ENCODE measurements at regions of chr12 and their contacts with region 1.

Region 1: DNA sequence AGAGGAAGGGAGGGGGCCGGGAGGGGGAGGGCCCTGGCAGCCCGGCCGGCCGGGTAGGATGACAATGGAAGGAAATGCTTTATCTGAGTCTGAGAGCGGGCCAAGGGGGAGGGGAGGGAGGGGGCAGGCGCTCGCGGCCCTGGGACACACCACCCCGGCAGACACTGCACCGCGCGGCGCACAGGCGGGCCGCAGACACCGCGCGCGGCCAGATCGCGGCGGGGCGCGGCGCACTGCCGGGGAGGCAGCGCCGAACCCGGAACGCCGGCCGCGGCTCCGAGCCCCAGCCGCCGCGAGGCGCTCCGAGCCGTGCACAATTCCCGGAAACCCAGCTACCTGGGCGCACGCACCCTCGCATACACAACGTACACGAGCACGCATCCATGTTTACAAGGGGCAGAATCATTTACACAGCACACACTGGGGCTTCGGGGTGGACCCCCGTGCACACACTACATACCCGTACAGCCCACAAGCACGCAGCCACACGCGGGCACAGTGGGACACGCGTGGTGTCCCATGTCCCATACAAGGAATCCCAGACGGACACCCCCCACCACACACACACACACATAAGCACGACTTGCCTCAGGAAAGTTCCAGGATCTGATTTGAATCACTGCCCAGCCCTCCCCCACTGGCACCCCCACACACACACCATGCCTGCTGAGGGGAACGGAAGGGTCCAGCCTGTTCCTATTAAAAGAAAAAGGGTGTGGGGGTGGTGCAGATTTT is at the start of gene HDAC7:
- DNase-seq: peak in 1 of 2 donors; percentile 91
- H3K4me3 ChIP-seq: peak within 1 kb of the TSS; percentile 88 to 89
- H3K27ac ChIP-seq: peak within 1 kb of the TSS; percentile 97
- H3K4me1 ChIP-seq: peaks cover 34 to 66% of the 10 kb centered on the region in 2 donors
- H3K27me3 ChIP-seq: no peaks in the 10 kb centered on the region
- CTCF ChIP-seq: peak in 1 of 3 experiments; percentile 22
- total RNA-seq, gene HDAC7: 202 TPM

Region 2: GRCh38 chr12:46372544-46373110 is 1447.4 kb before region 1 on chr12 and contains the start of gene SLC38A2:
- intact Hi-C with region 1: loop called (anchors 5 kb)
- DNase-seq: peak; percentile 90 to 99
- H3K4me3 ChIP-seq: peak within 1 kb of the TSS; percentile 94 to 98
- H3K27ac ChIP-seq: peak within 1 kb of the TSS; percentile 97 to 98
- H3K4me1 ChIP-seq: peaks cover 4 to 15% of the 10 kb centered on the region in 2 donors
- H3K27me3 ChIP-seq: no peaks in the 10 kb centered on the region
- CTCF ChIP-seq: no peak
- total RNA-seq, gene SLC38A2: 384 TPM

Region 3: DNA sequence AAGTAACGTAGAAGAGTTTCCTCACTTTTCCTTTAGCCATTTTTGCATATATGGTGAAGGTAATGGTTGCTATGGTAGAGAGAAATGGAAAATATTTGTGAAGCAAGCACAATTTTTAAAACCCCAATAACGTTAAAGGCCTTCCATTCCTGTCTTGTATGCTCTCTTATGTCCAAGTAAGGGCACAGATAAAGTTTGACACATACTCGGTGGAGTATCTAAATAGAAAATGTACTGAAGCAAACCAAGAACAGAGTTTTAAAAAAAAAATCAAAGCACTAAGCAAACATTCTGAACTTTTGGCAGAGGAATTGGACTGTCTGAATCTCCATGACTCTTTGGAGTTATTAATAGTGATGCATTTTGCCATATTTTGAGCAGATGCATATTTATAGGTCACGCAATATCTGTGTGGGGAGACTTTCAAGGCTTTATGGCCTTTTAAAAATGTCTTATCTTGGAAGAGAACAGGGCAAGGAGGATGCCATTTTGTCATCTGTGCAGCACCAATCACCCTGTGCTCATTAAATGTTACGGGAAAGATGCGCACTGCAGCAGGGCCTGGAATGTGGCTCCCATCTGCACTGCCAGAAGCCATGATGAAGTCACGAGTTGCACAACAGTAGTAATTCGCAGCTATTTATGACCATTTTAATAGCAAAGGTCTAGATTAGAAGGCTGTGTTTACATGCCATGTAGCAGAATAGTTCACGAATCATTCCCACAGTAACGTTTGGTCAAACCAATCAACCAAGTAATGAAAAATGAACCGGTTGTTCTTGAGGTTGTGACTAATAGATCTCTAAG is 717.0 kb before region 1 on chr12:
- intact Hi-C with region 1: loop called (anchors 10 kb)
- DNase-seq: no peak
- H3K4me3 ChIP-seq: peak overlapping the region in 1 of 2 donors; percentile 10
- H3K27ac ChIP-seq: peak overlapping the region; percentile 75 to 87
- H3K4me1 ChIP-seq: peaks cover 0 to 34% of the 10 kb centered on the region in 2 donors
- H3K27me3 ChIP-seq: no peaks in the 10 kb centered on the region
- CTCF ChIP-seq: no peak

Region 4: GRCh38 chr12:48001505-48002413 is 181.7 kb after region 1 on chr12:
- intact Hi-C with region 1: no loop called
- DNase-seq: peak in 1 of 2 donors; percentile 74
- H3K4me3 ChIP-seq: peak overlapping the region; percentile 68 to 73
- H3K27ac ChIP-seq: peak overlapping the region in 1 of 2 donors; percentile 45
- H3K4me1 ChIP-seq: peaks cover 14 to 32% of the 10 kb centered on the region in 2 donors
- H3K27me3 ChIP-seq: peaks cover 12% of the 10 kb centered on the region
- CTCF ChIP-seq: no peak